ENCODE measurements at regions of chr2 and their contacts with region 1.

Region 1: GRCh38 chr2:3959372-3959771 is 256.0 kb downstream of the DCDC2C start:
- DNase-seq: no peak
- H3K4me3 Mint-ChIP-seq: no peak overlapping the region
- H3K27ac Mint-ChIP-seq: no peak overlapping the region
- H3K4me1 Mint-ChIP-seq: no peaks in the 10 kb centered on the region
- H3K27me3 Mint-ChIP-seq: no peaks in the 10 kb centered on the region

Region 2: GRCh38 chr2:5365871-5366461 is 1406.6 kb after region 1 on chr2:
- CTCF ChIA-PET with region 1: interaction called, 4 read pairs
- POLR2A ChIA-PET with region 1: no interaction called
- intact Hi-C with region 1: loop called (anchors 5 kb)
- DNase-seq: peak; percentile 67
- H3K4me3 Mint-ChIP-seq: no peak overlapping the region
- H3K27ac Mint-ChIP-seq: no peak overlapping the region
- H3K4me1 Mint-ChIP-seq: no peaks in the 10 kb centered on the region
- H3K27me3 Mint-ChIP-seq: no peaks in the 10 kb centered on the region

Measured in activated CD4-positive, alpha-beta memory T cell treated with anti-CD3 and anti-CD28 coated beads for 36 hours (primary cell).